Posterior vena cava (tissue), 2 donors: ENCODE measurements at regions of chr19 and their contacts with region 1.

Region 1: DNA sequence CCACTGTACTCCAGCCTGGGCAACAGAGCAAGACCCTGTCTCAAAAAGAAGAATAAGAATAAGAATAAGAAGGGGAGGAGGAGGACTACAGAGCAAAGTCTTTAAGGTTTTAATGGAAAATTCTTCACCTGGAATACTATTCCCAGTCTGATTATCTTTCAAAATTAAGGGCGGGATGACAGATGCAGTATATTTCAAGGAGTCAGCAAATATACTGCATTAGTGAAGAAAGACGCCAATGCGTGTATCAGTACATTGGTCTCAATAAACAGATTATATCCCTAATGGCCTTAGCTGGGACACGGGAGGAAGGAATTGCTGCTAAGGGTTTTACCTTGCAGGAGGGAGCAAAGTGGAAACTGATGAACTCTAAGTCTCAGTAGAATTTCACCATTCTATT is 54.1 kb upstream of the PDCD5 start:
- DNase-seq: no peak

Region 2: GRCh38 chr19:32498648-32499200 is 28.2 kb before region 1 on chr19:
- intact Hi-C with region 1: no loop called
- DNase-seq: no peak

Region 3: GRCh38 chr19:32624410-32624809 is 97.5 kb after region 1 on chr19:
- intact Hi-C with region 1: loop called in 1 of 2 experiments (anchors 5 kb)
- DNase-seq: no peak